Gastrocnemius medialis (tissue), 4 donors: ENCODE measurements at regions of chr20 and their contacts with region 1.

Region 1: DNA sequence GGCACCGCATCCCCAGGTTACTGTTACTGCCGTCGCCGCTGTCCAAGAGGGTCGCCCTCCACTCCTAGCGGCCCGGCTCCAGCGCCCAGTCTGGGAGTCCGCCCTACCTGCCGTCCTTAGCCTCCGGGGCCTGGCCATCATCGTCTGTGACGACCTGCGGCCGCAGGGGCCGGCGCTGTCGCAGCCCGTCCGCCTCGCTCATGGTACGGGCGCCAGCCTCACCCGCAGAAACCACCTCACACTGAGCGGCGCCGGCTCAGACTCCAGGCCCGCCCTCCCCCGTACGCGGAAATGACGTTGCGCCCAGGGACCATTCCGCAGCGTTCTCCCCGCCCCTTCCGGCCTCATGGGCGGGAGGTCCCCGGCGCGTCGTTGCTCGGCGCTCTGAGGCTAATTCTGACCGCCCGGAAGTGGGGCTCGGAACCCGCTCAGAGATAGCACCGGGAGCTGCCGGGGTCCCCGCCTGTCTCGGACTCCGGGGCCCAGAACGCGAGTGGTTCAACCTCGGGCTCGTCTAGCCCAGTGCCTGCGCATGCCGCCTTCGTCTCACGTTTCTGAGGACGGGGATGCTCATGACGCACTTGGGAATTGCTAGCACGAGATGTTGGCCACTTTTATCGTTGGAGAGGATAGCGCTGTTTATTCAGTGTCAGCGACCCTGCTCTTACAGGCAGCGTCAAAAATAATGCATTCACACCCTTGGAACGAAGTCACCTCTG is at the start of gene APMAP:
- DNase-seq: peak; percentile 91 to 93
- ATAC-seq: peak; percentile 81 to 88
- H3K4me3 ChIP-seq: peak within 1 kb of the TSS; percentile 85 to 92 (median 88)
- H3K27ac ChIP-seq: peak within 1 kb of the TSS; percentile 94 to 98 (median 96)
- H3K4me1 ChIP-seq: peaks cover 40 to 49% of the 10 kb centered on the region in 2 donors
- H3K27me3 ChIP-seq: no peaks in the 10 kb centered on the region
- CTCF ChIP-seq: peak in 1 of 5 experiments; percentile 6
- POLR2A ChIP-seq: peak; percentile 97 to 98
- total RNA-seq, gene APMAP: 24.2 to 108 (median 29.3) TPM

Region 2: DNA sequence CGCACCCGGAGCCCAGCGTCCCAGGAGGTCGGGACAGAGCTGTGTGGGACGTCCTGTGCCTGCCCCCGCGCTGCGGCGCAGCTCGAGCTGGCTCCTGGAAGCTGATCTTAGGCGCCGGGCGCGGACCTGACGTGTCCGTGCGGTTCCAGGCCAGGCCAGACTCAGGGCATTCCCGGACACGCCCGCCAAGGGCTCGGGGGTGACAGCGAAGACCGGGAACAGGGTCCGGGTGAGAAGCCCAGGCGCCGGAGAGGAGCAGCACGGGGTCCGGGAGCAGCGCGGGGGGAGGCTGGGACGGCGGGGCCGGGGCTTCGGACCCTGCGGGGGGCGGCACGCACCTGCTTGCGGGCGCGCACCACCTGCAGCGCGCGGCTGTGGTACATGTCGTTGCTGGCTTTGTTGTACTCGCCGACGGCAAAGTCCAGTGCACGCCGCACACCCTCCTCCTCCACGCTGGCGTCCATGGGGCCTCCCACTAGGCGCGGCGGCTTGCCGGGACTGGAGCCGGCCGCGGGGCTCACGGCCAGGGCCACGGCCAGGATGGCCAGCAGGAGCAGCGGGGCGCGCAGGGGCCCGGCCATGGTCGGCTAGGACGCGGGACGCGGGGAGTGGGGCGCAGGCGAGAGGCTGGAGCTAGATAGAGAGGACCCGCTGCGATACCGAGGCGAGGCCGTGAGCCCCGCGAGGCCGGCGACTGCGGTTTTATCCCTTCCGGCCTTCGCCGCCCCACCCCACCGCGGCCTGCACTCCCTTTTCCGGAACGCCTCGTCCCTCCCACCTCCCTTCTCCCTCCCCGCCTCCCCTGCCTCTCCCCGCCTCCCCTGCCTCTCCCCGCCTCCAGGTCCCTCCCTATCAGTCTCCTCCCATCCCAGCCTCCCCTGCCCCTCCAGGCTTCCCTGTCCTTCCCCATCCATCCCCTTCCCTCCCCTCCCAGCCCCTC is 1355.1 kb before region 1 on chr20 and contains the start of gene CST3:
- in situ Hi-C with region 1: loop called in 1 of 4 experiments (anchors 25 kb)
- intact Hi-C with region 1: loop called (anchors 5 kb)
- DNase-seq: peak; percentile 94 to 97
- ATAC-seq: peak; percentile 31 to 32
- H3K4me3 ChIP-seq: peak within 1 kb of the TSS; percentile 70 to 98 (median 83)
- H3K27ac ChIP-seq: peak within 1 kb of the TSS; percentile 96 to 100 (median 96)
- H3K4me1 ChIP-seq: peaks cover 58 to 67% of the 10 kb centered on the region in 2 donors
- H3K27me3 ChIP-seq: no peaks in the 10 kb centered on the region
- CTCF ChIP-seq: peak in 1 of 5 experiments; percentile 18
- POLR2A ChIP-seq: peak; percentile 96
- total RNA-seq, gene CST3: 461 to 1,821 (median 697) TPM

Region 3: DNA sequence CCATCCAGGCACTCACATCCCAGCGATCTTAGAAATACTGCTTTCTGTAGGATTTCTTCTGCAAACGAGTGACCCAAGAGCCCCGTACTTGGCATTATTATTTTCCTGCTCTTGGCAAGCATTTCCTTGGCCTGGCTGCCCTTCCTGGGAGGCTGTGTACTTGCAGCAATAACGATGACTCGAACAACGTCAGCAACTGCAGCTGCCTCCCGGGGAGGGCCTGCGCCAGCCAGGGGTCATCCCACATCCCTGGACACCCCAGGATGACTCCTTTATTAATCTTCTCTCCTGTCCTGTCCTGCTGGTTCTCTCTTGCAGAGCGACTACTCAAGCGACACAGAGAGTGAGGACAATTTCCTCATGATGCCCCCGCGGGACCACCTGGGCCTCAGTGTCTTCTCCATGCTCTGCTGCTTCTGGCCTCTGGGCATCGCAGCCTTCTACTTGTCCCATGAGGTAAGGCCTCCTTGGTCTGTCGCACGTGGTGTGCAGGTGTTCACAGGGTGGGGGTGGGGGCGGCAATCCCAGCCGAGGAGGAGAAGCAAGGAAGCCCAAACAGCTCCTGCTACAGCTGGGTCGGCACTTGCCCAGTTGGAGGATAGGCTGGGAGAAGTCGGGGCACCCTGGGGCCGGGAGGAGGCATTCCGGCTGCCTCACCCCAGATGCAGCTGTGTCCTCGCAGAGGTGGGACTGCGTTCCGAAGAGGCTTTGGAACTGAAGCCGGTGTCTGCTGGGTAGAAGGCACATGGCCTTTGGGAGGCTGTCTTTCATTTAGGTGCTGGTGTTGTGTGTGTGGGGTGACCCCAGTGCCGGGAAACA is 407.9 kb before region 1 on chr20:
- in situ Hi-C with region 1: no loop called
- intact Hi-C with region 1: no loop called
- DNase-seq: no peak
- ATAC-seq: no peak
- H3K4me3 ChIP-seq: no peak overlapping the region
- H3K27ac ChIP-seq: no peak overlapping the region
- H3K4me1 ChIP-seq: no peaks in the 10 kb centered on the region
- H3K27me3 ChIP-seq: no peaks in the 10 kb centered on the region
- CTCF ChIP-seq: no peak
- POLR2A ChIP-seq: no peak

Region 4: GRCh38 chr20:25065625-25066338 is 73.1 kb after region 1 on chr20:
- in situ Hi-C with region 1: loop called (anchors 5 kb)
- intact Hi-C with region 1: loop called (anchors 1 kb)
- DNase-seq: peak in 1 of 2 donors; percentile 54
- ATAC-seq: peak; percentile 88 to 93
- H3K4me3 ChIP-seq: no peak overlapping the region
- H3K27ac ChIP-seq: no peak overlapping the region
- H3K4me1 ChIP-seq: peaks cover 0 to 3% of the 10 kb centered on the region in 2 donors
- H3K27me3 ChIP-seq: peaks cover 0 to 3% (median 0%) of the 10 kb centered on the region in 3 donors
- CTCF ChIP-seq: peak; percentile 83 to 91 (median 86)
- POLR2A ChIP-seq: no peak

Region 5: GRCh38 chr20:25195014-25195961 is 202.6 kb after region 1 on chr20 and contains the start of gene ENTPD6:
- in situ Hi-C with region 1: loop called in 3 of 4 experiments (anchors 5 to 25 kb)
- intact Hi-C with region 1: loop called (anchors 5 kb)
- DNase-seq: peak; percentile 81 to 88
- ATAC-seq: peak; percentile 94
- H3K4me3 ChIP-seq: peak within 1 kb of the TSS; percentile 75 to 96 (median 84)
- H3K27ac ChIP-seq: peak within 1 kb of the TSS; percentile 78 to 95 (median 86)
- H3K4me1 ChIP-seq: peaks cover 6 to 24% of the 10 kb centered on the region in 2 donors
- H3K27me3 ChIP-seq: no peaks in the 10 kb centered on the region
- CTCF ChIP-seq: peak in 2 of 5 experiments; percentile 28 to 31
- POLR2A ChIP-seq: peak; percentile 59 to 78
- total RNA-seq, gene ENTPD6: 27.0 to 61.1 (median 50.2) TPM

Region 6: GRCh38 chr20:25247956-25248785 is 255.5 kb after region 1 on chr20 and contains the start of gene PYGB:
- in situ Hi-C with region 1: loop called in 1 of 4 experiments (anchors 25 kb)
- intact Hi-C with region 1: loop called (anchors 5 kb)
- DNase-seq: peak; percentile 64 to 70
- ATAC-seq: peak; percentile 89 to 90
- H3K4me3 ChIP-seq: peak within 1 kb of the TSS; percentile 74 to 92 (median 84)
- H3K27ac ChIP-seq: peak within 1 kb of the TSS; percentile 79 to 92 (median 84)
- H3K4me1 ChIP-seq: peaks cover 24 to 38% of the 10 kb centered on the region in 2 donors
- H3K27me3 ChIP-seq: no peaks in the 10 kb centered on the region
- CTCF ChIP-seq: no peak
- POLR2A ChIP-seq: peak; percentile 79 to 83
- total RNA-seq, gene PYGB: 13.6 to 50.7 (median 27.0) TPM

Region 7: DNA sequence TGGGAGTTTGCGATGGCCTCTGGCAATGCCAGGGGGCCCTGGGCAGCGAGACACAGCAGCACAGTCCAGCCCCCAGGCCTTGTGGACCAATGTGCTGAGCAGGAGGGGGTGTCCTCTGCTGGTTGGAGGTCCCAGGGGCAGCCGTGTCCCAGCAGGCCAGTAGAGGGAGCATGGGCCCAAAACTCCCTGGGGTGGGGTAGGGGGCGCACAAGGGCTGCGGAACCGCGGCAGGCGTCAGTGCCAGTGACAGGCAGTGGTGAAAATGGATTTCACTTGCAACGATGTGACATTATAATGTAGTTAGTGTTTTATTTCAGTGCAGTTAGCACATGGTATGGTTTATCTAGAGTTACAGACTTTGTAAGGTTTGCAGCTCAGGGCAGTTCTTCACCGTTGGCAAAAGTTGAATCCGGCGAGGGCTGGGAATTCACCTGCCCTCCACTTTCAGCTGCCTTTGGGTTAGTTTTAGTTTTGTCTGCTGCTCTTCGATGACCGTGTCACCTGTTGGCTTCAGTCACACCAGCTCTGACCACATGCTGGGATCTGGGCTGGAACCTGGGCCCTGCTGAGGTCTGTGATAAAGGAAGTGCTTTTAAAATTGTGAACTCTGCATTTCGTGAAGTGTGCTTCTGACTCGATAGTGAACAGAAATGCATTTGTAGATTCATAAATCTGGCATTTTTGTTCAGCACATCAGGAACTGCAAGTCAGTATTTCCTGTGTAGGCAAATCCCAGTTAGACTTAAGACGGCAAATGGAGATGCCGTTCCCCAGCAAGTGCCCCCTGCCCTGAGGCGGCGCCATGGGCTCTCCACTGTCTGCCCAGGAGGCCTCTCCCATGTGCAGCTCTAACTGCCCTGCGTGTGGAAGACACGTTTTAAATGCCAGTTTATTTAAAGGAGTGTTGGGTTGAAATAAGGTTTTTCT is 302.1 kb after region 1 on chr20:
- in situ Hi-C with region 1: loop called in 1 of 4 experiments (anchors 25 kb)
- intact Hi-C with region 1: no loop called
- DNase-seq: peak in 1 of 2 donors; percentile 48
- ATAC-seq: peak; percentile 19 to 28
- H3K4me3 ChIP-seq: no peak overlapping the region
- H3K27ac ChIP-seq: peak overlapping the region; percentile 46 to 85 (median 65)
- H3K4me1 ChIP-seq: peaks cover 26 to 32% of the 10 kb centered on the region in 2 donors
- H3K27me3 ChIP-seq: no peaks in the 10 kb centered on the region
- CTCF ChIP-seq: peak; percentile 51 to 80 (median 55)
- POLR2A ChIP-seq: no peak

Region 8: DNA sequence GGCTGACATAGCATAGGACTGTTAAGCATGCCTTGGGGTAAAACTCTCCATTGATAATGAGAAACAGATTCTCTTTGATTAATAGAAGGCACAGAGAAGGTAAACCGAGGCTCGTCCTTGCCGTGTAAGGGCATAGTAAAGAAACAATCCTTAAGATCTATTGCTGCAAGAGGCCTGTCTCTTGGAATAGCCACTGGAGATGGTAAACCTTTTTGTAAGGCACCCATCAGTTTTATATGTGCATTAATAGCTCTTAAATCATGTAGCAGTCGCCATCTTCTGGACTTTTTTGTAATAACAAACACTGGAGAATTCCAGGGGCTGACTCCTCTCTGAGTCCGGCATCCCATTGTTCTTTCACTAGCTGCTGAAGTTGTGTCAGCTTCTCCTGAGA is 406.4 kb after region 1 on chr20:
- in situ Hi-C with region 1: loop called in 3 of 4 experiments (anchors 10 kb)
- intact Hi-C with region 1: loop called (anchors 1 kb)
- DNase-seq: peak in 1 of 2 donors; percentile 26
- ATAC-seq: peak; percentile 86 to 92
- H3K4me3 ChIP-seq: no peak overlapping the region
- H3K27ac ChIP-seq: no peak overlapping the region
- H3K4me1 ChIP-seq: no peaks in the 10 kb centered on the region
- H3K27me3 ChIP-seq: no peaks in the 10 kb centered on the region
- CTCF ChIP-seq: peak; percentile 30 to 63 (median 55)
- POLR2A ChIP-seq: no peak